ENCODE measurements at regions of chr11 and their contacts with region 1.

Region 1: GRCh38 chr11:74449369-74449931 is 17.9 kb downstream of the KCNE3 start:
- DNase-seq: peak in 1 of 2 donors; percentile 28
- ATAC-seq: peak; percentile 71 to 78
- H3K4me3 ChIP-seq: no peak overlapping the region
- H3K27ac ChIP-seq: no peak overlapping the region
- H3K4me1 ChIP-seq: peaks cover 8 to 9% of the 10 kb centered on the region in 2 donors
- H3K27me3 ChIP-seq: no peaks in the 10 kb centered on the region
- CTCF ChIP-seq: peak; percentile 52 to 79 (median 74)
- POLR2A ChIP-seq: no peak

Region 2: DNA sequence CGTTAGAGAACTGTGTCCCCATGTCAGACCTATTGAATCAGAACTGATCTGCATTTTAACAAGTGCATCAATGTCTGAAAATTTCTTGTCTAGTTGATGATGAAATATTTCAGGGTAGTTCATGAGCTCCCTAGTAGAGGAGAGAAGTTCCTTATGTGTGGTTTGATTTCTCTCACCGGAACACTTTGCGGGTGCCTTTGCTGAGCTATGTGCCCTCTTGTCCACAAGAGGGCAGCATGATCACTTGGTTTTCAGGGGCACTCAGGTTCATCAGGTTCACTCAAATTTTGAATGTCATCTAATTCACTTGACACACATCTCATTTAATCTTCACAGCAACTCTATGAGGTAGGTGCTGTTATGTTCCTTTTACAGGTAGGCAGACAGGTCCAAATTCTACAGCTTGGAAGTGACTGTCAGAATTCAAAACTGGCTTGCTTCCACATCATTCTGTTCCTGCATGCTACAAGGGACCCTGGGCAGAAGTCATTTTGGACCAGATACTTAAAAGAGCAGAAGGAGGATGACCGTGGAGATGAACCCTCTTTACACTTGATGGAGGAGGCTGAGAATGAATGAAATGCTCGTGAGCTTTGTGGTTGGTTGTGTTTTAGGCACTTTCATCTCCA is 193.6 kb before region 1 on chr11:
- in situ Hi-C with region 1: loop called (anchors 5 to 10 kb)
- intact Hi-C with region 1: loop called (anchors 1 kb)
- DNase-seq: peak in 1 of 2 donors; percentile 36
- ATAC-seq: peak; percentile 72 to 74
- H3K4me3 ChIP-seq: no peak overlapping the region
- H3K27ac ChIP-seq: no peak overlapping the region
- H3K4me1 ChIP-seq: peaks cover 17 to 29% of the 10 kb centered on the region in 2 donors
- H3K27me3 ChIP-seq: no peaks in the 10 kb centered on the region
- CTCF ChIP-seq: peak; percentile 71 to 90 (median 86)
- POLR2A ChIP-seq: no peak

Region 3: GRCh38 chr11:74388678-74389327 is 60.6 kb before region 1 on chr11:
- in situ Hi-C with region 1: loop called (anchors 5 to 10 kb)
- intact Hi-C with region 1: loop called (anchors 1 kb)
- DNase-seq: peak; percentile 32 to 41
- ATAC-seq: peak; percentile 76 to 91
- H3K4me3 ChIP-seq: no peak overlapping the region
- H3K27ac ChIP-seq: no peak overlapping the region
- H3K4me1 ChIP-seq: no peaks in the 10 kb centered on the region
- H3K27me3 ChIP-seq: no peaks in the 10 kb centered on the region
- CTCF ChIP-seq: peak; percentile 60 to 79 (median 70)
- POLR2A ChIP-seq: no peak

Region 4: DNA sequence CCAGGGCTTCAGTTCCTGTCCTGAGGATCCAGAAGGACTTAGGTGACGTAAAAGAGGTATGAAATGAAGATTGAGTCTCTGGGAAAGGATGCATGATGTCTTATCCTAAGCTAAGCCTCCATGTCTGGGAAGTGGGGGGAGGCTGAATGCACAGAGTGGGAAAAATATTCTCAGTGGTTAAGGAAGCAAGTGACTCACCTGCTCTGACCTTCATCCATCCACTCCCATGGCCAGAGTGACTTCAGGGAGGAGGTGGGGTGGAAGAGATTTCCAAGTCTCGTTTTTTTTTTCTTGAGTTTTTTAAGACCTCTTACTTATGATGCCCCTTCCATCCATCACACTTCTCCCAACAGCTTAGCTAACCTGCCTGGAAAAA is 110.5 kb after region 1 on chr11:
- in situ Hi-C with region 1: loop called in 1 of 4 experiments (anchors 10 kb)
- intact Hi-C with region 1: no loop called
- DNase-seq: no peak
- ATAC-seq: no peak
- H3K4me3 ChIP-seq: no peak overlapping the region
- H3K27ac ChIP-seq: no peak overlapping the region
- H3K4me1 ChIP-seq: no peaks in the 10 kb centered on the region
- H3K27me3 ChIP-seq: no peaks in the 10 kb centered on the region
- CTCF ChIP-seq: no peak
- POLR2A ChIP-seq: no peak

Region 5: DNA sequence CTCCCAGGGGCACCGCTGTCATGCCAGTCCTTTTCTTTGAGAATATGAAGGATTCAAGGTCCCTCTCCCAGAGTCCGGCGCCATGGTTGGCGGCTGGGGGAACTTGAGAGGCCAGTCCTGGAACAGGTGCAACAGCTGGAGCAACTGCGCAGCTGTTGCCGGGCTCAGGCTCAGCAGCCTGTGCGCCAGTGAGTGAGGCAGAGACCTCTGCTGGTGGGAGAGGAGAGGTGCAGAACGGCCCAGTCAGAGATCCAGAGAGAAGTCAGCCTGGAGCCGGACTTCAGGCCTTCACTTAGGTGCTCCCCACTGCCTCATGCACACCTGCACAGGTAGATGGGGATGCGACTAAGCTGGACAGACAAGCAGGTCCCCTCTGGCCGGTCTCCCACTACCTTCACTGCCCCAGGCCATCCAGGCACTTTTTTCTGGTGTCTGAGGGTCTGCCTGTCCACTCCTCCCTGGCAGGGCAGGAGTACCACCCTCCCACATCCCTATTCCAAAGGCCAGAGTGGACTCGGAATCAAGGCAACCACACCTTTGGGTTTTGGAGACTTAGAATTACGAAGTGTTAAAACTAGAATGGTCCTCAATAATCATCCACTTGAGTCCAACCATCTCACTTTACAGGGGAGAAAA is 277.2 kb after region 1 on chr11:
- in situ Hi-C with region 1: loop called in 2 of 4 experiments (anchors 25 kb)
- intact Hi-C with region 1: loop called (anchors 5 kb)
- DNase-seq: peak; percentile 79 to 89
- ATAC-seq: peak; percentile 92 to 98
- H3K4me3 ChIP-seq: no peak overlapping the region
- H3K27ac ChIP-seq: peak overlapping the region; percentile 7 to 63 (median 42)
- H3K4me1 ChIP-seq: peaks cover 3% of the 10 kb centered on the region in 2 donors
- H3K27me3 ChIP-seq: peaks cover 8 to 16% (median 10%) of the 10 kb centered on the region in 3 donors
- CTCF ChIP-seq: peak; percentile 93 to 98 (median 95)
- POLR2A ChIP-seq: no peak